ENCODE measurements at regions of chr22 and their contacts with region 1.

Region 1: DNA sequence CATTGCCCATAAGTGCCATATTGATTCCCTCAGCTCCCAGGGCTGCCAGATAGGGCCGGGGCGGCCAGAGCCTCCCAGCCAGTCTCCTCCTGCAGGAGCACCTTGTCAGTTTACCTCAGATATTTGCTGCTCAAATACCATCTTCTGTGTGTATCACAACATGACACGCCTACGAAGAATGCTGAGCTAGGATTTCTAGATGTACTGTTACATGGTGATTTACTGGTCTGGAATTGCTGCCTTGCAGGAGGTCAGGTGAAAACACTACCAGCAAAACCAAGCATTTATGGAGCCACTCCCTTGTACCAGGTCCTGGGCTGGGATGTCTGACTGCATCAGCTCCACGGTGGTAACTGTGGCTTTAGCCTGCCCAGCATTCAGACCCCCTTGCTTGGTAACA is 11.8 kb downstream of the MICAL3 start:
- DNase-seq: no peak
- H3K4me3 ChIP-seq: no peak overlapping the region
- CTCF ChIP-seq: no peak

Region 2: GRCh38 chr22:18024276-18024947 is 11.9 kb after region 1 on chr22 and contains the start of gene MICAL3:
- CTCF ChIA-PET with region 1: interaction called, 11 read pairs
- POLR2A ChIA-PET with region 1: no interaction called
- DNase-seq: no peak
- H3K4me3 ChIP-seq: peak within 1 kb of the TSS; percentile 68
- CTCF ChIP-seq: peak; percentile 74

Measured in AG04449 (cell line).